HCT116 (cell line): ENCODE measurements at regions of chr2 and their contacts with region 1.

Region 1: DNA sequence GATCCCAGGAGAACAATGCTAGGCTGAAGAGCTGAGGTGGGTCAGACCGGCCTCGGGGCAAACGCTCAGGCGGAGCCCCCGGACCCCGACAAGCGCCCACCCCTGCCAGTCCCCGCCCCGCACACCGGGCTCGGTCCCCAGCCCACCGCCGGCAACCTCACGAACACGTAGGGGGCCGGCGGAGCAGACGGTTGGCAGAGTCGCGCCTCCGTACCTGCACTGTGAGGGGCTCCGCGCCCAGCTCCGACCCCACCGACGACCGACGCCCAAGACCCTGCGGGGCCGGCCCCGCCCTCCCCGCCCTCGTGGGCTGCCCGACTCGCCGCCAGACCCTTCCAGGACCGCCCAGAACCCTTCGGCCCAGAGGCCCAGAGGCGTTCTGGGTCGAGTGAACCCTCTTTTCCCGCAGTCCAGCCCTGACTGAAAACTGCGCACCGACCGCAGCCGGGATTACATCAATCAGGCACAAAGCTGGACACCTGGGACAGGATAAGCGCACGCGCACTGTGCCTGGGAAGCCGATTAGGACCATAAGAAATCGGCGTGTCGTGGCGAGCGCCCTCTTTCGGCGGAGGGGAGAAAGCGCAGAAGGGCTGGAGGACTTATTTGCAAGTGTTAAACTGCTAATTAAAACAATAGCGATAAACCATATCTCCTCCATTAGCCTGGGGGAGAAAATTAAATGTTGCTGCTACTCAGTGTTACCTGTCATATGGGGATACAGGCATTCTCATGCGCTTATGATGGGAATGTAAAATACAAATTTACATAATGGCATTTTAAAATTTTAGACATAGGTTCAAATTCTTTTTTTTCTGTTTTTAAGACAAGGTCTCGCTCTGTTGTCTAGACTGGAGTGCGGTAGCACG is 11.7 kb upstream of the DCTN1 start:
- DNase-seq: peak; percentile 88
- ATAC-seq: peak; percentile 85
- H3K4me3 ChIP-seq: peak overlapping the region; percentile 93 to 95
- H3K27ac ChIP-seq: peak overlapping the region; percentile 69
- H3K4me1 ChIP-seq: peaks cover 5 to 17% of the 10 kb centered on the region in 2 experiments; a peak in 3 of 4 replicates
- H3K27me3 ChIP-seq: no peaks in the 10 kb centered on the region
- CTCF ChIP-seq: peak; percentile 81 to 99 (median 96)
- POLR2A ChIP-seq: peak; percentile 47
- RAD21 ChIP-seq: peak; percentile 51; the same call in 1 of the 2 replicates

Region 2: GRCh38 chr2:74267068-74267467 is 124.7 kb before region 1 on chr2:
- CTCF ChIA-PET with region 1: no interaction called
- POLR2A ChIA-PET with region 1: no interaction called
- RAD21 ChIA-PET with region 1: interaction called in 1 of 2 experiments, 4 read pairs
- intact Hi-C with region 1: loop called (anchors 5 kb)
- DNase-seq: peak; percentile 53
- ATAC-seq: peak; percentile 99
- H3K4me3 ChIP-seq: no peak overlapping the region
- H3K27ac ChIP-seq: no peak overlapping the region
- H3K4me1 ChIP-seq: peaks cover 8 to 10% of the 10 kb centered on the region in 2 experiments
- H3K27me3 ChIP-seq: no peaks in the 10 kb centered on the region
- CTCF ChIP-seq: peak; percentile 64 to 67 (median 66)
- POLR2A ChIP-seq: no peak
- RAD21 ChIP-seq: peak; percentile 69

Region 3: DNA sequence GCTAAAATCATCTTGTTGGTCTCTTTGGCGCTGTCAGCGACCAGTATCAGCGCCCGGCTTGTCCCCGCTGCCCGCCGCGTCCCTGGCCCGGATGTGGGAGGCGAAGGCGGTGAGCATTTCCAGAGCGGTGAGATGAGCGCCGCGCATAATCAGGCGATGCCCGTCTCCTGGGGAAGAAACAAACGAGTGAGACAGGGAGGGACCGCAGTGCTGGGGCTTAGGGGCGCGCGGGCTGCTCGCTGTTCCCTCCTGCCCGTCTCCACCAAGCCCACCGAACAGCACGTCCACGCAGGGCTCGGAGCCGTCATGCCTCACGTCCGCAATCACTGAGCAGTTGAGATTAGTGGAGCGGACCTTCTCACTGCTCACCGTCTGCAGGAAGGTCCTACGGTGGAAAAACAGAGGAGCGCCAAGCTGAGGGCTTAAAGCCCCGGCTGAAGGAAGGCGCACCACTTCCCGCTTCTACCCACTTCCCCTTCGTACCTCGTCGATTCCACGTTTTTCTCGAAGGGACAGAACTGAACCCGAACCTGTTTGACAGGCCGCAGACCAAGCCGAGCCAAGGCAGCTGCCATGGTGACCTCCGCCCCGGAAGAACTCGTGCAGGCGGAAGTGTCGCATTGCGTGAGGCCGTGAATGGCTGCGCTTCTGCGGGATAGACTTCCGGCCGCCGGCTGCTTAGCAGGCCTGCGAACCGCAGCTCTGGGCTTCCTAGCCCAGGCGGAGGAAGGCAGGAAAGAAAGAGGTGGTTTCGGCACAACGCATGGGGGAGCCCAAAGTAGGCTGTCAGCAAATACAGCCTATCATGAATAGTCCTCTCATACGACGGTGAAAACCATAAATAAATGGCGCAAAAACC is 80.5 kb after region 1 on chr2 and contains the start of gene MRPL53:
- CTCF ChIA-PET with region 1: no interaction called
- POLR2A ChIA-PET with region 1: no interaction called
- RAD21 ChIA-PET with region 1: no interaction called
- intact Hi-C with region 1: no loop called
- DNase-seq: peak; percentile 89
- ATAC-seq: peak; percentile 86
- H3K4me3 ChIP-seq: peak within 1 kb of the TSS; percentile 94 to 96
- H3K27ac ChIP-seq: peak within 1 kb of the TSS; percentile 82
- H3K4me1 ChIP-seq: peaks cover 12 to 18% of the 10 kb centered on the region in 2 experiments; a peak in 3 of 4 replicates
- H3K27me3 ChIP-seq: no peaks in the 10 kb centered on the region
- CTCF ChIP-seq: no peak
- POLR2A ChIP-seq: peak; percentile 93
- RAD21 ChIP-seq: no peak
- total RNA-seq, gene MRPL53: 65.4 TPM